KBM-7 (cell line): ENCODE measurements at regions of chr9 and their contacts with region 1.

Region 1: GRCh38 chr9:101311758-101312420 is 72.9 kb downstream of the BAAT start:
- DNase-seq: peak; percentile 68

Region 2: GRCh38 chr9:100714372-100715099 is 597.4 kb before region 1 on chr9:
- in situ Hi-C with region 1: loop called (anchors 25 kb)
- DNase-seq: peak; percentile 63